Right ventricle myocardium inferior (tissue), 1 donor: ENCODE measurements at regions of chr5 and their contacts with region 1.

Region 1: DNA sequence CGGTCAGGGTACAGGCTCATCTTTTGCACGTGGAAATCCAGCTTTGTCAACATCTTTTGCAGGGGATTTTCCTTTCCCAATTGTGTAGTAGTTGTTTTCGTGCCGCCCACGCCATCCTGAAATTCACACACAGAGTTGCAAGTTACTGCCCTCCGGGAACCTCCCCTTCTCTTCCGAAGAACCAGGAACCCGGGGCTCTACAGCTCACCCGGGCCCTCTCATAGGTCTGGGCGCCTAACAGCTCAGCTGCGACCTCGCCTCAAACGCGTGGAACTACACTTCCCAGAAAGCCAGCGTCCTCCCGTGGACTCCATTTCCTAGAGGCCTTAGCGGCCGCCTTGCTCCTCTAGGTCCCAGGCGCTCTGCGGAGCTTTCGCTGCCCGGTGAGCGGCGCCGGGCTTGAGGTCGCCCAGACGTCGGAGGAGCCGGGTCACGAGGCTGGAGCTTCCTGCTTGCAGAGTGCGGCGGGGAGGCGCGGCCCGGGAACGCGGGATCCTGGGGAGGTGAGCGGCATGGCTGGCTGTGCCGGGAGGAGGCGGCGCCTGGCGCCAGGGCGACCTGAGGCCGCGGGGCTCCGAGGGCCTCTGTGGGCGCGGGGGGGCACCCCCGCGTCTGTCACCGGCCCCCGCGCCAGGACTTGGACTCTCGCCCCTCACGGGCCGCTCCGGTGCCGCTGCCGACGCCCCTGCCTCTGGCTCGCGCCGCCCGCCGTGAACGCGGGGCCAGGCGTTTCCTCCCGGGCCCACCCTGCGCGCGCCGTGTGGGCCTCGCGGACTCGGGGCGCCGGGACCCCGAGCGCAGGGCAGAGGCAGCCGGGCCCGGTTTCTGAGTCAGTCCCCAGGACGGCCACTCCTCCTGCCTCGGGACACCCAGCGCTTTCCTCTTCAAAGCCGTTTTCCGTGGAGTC is at the start of gene ZNF354B:
- DNase-seq: peak; percentile 95
- ATAC-seq: peak; percentile 99
- total RNA-seq, gene ZNF354B: 6.0 TPM

Region 2: DNA sequence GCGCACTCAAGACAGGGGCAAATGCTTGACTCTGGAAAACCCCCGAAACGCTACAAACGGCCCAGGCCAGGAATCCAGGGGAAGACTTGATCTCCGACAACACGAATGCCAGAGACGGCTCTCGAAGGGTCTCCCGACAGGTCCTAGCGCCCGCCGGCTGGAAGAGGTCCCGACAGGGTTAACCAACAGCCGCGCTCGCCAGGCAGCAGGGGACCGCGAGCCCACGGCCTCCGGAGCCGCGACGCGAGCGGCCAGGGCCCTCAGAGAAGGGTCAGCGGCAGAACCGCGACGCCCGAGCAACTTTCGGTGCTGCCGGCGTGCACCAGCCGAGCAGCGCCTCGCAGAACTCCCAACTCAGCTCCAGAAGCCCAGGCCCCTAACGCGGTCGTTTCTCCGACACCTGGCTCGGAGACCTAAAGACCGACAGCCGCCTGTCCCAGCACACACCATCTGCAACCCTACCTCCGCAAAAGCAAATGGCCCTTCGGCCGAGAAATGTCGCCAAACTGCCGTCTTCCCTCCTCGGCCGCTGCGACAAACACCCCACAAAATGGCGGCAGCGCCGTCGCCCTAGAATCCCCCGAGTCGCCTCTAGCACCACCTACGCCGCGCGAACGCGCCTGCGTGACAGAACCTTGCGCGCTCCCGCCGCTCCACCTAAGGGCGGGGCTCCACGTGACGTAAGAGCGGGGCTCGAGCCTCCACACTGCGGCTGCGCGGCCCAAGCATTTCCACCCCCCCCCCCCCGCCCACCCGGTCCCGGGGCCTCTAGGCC is 233.2 kb before region 1 on chr5 and contains the start of gene CLK4:
- intact Hi-C with region 1: loop called (anchors 5 kb)
- DNase-seq: peak; percentile 99
- ATAC-seq: peak; percentile 98
- total RNA-seq, gene CLK4: 20.5 TPM